ENCODE measurements at regions of chr6 and their contacts with region 1.

Region 1: DNA sequence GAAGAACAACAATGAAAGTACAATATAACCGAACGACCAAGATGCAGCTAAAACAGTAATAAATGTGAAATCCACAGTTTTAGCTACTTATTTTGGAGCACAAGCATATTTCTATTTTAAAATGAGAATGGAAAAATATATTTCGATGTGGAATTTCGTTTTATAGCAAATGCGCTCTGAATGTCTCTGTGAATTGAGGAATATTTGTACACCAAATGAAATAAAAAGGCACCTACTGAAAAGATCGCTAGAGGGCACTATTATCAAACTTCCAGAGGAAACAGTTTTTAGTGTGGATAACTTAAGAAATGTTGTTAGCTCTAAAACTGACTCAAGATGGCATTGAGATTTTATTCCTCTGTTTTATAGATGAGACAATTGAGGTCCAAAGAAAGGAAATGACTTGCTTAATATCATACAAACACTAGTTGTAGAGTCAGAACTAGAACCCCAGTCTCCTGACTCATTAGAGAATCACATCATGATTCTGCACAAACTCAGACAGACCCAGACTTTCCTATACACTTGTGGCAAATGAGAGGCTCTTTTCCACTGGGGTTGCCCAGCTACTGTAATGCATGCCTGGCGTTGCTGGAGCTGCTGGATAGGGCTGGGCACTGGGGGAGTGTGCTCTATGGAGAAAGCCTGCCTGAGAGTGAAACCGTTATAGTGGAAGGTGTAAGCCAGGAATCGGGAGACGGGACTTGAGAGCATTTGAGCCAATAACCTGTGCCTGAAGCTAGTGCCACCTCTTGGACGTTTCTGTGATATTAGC is 51.9 kb downstream of the GCLC start:
- DNase-seq: peak; percentile 74
- H3K4me3 ChIP-seq: peak overlapping the region in 1 of 3 experiments; percentile 31
- H3K27ac ChIP-seq: no peak overlapping the region
- H3K4me1 ChIP-seq: no peaks in the 10 kb centered on the region
- H3K27me3 ChIP-seq: no peaks in the 10 kb centered on the region
- CTCF ChIP-seq: peak; percentile 51 to 54
- POLR2A ChIP-seq: no peak

Region 2: DNA sequence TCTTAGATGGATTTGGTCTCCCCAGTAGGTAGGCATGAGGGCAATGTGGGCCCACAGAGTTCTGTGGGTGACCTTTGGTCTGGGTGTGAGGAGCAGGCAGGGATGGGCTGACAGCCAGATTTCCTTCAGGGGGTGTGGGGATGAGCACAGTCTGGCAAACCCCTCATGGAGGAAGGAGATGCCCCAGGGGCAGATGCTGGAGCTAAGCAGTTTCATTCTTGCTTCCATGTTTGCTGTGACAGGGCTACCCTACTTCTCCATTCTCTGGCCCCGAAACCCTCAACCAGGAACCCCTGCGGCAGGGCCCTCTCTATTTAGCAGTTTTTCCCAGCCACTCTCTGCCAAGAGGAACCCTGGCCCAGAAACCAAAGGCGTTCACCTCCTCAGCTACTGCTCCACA is 11.5 kb after region 1 on chr6:
- CTCF ChIA-PET with region 1: interaction called, 15 read pairs
- POLR2A ChIA-PET with region 1: no interaction called
- dilution Hi-C with region 1: no loop called
- intact Hi-C with region 1: no loop called
- DNase-seq: no peak
- H3K4me3 ChIP-seq: no peak overlapping the region
- H3K27ac ChIP-seq: no peak overlapping the region
- H3K4me1 ChIP-seq: no peaks in the 10 kb centered on the region
- H3K27me3 ChIP-seq: no peaks in the 10 kb centered on the region
- CTCF ChIP-seq: no peak
- POLR2A ChIP-seq: no peak

Region 3: DNA sequence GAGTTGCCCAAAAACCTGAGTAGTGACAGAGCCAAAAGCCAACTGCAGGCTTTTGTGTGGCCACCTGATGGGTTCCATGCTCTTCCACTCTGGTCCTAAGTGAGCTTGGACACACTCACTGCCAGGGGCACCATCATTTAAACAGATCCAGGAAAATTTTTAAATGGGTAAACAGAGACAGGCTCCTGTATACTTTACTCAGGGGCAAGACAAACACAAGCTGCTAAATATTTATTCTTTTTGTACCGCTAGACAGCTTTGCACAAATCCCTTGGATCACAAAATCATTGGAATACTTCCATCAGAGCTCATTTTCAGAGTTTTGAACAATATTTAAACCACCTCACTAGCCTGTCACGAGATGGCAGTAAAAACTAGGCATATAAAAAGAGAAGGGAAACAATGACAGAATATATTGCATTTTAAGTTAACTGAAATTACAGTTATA is 20.5 kb after region 1 on chr6:
- CTCF ChIA-PET with region 1: interaction called, 21 read pairs
- POLR2A ChIA-PET with region 1: no interaction called
- dilution Hi-C with region 1: no loop called
- intact Hi-C with region 1: no loop called
- DNase-seq: no peak
- H3K4me3 ChIP-seq: no peak overlapping the region
- H3K27ac ChIP-seq: no peak overlapping the region
- H3K4me1 ChIP-seq: no peaks in the 10 kb centered on the region
- H3K27me3 ChIP-seq: no peaks in the 10 kb centered on the region
- CTCF ChIP-seq: no peak
- POLR2A ChIP-seq: no peak

Region 4: DNA sequence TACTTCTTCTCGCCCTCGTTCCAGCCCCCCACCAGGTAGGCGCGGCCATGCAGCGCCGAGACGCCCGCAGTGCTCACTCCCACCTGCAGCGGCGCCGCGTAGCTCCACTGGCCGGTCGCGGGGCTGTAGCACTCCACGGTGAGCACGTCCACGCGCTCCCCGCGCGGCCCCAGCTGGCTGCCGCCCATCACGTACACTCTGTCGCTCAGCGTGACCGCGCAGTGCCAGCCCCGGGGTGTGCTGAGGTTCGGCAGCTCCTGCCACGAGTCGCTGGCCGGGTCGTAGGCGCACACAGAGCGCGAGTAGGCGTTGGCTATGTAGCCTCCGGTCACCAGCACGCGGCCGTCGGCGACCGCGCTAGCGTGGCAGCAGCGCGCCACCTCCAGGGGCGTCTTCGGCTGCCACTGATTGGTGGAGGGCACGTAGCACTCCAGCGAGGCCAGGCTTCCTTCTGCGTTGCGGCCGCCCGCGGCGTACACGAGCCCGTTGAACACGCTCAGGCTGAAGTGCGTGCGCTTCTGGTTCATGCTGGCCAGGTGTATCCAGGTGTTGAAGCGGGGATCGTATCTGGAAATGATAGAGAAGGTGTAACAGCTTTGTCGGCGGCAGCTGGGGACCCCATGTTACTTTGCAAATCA is 158.8 kb after region 1 on chr6:
- CTCF ChIA-PET with region 1: interaction called, 56 read pairs
- POLR2A ChIA-PET with region 1: no interaction called
- dilution Hi-C with region 1: no loop called
- intact Hi-C with region 1: loop called (anchors 1 kb)
- DNase-seq: peak; percentile 64
- H3K4me3 ChIP-seq: peak overlapping the region in 2 of 3 experiments; percentile 42 to 48
- H3K27ac ChIP-seq: no peak overlapping the region
- H3K4me1 ChIP-seq: peaks cover 5% of the 10 kb centered on the region
- H3K27me3 ChIP-seq: peaks cover 9 to 10% of the 10 kb centered on the region in 2 experiments
- CTCF ChIP-seq: peak in 1 of 2 donors; percentile 48
- POLR2A ChIP-seq: no peak

Region 5: GRCh38 chr6:53679446-53679933 is 186.4 kb after region 1 on chr6:
- CTCF ChIA-PET with region 1: interaction called, 9 read pairs
- POLR2A ChIA-PET with region 1: no interaction called
- dilution Hi-C with region 1: no loop called
- intact Hi-C with region 1: loop called (anchors 1 kb)
- DNase-seq: peak; percentile 33
- H3K4me3 ChIP-seq: no peak overlapping the region
- H3K27ac ChIP-seq: no peak overlapping the region
- H3K4me1 ChIP-seq: no peaks in the 10 kb centered on the region
- H3K27me3 ChIP-seq: peaks cover 0 to 2% of the 10 kb centered on the region in 2 experiments
- CTCF ChIP-seq: peak; percentile 20 to 28
- POLR2A ChIP-seq: no peak

Region 6: DNA sequence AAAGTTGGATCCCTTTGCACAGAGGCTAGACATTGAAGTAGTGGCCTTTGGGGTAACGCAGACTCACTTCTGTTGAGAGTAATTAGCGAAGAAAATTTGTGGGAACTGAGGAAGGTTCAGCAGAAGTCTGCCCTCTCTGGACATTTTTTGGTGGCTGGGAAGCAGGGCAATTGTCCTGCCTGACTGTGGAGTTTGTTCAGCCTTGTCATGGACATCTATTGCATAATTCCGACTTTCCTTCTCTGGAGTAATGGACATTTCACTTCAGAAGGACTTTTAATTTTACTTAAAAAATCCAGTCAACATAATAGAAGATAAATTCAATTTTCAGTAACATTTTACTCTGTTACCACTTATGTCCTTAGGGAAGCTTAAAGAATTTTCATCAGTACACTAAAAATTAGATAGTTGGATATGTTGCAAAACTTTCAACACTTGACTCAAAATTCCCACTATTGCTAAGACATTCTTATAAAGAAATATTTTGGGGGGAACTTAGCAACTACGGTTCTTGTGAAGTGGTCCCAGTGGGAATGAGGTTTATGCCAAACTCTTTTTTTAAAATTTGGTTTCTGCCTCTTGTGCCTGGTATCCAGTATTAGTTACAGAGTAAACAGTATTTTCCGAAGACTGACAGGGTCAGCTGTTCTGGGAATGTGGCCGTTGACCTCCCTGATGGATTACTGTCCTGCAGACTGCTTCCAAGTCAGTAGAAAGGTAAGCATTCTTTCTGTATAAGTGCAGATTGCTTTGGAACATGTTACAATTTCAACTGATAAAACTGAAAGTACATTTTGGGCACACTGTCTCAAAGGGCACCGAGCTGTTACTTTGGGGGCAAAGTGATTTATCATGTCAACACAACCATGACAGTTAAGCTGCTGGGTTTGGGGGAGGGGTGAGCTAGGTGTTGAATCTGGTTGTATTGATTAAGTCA is 517.6 kb after region 1 on chr6:
- CTCF ChIA-PET with region 1: no interaction called
- POLR2A ChIA-PET with region 1: no interaction called
- dilution Hi-C with region 1: no loop called
- intact Hi-C with region 1: no loop called
- DNase-seq: no peak
- H3K4me3 ChIP-seq: no peak overlapping the region
- H3K27ac ChIP-seq: no peak overlapping the region
- H3K4me1 ChIP-seq: no peaks in the 10 kb centered on the region
- H3K27me3 ChIP-seq: no peaks in the 10 kb centered on the region
- CTCF ChIP-seq: no peak
- POLR2A ChIP-seq: no peak

Region 7: DNA sequence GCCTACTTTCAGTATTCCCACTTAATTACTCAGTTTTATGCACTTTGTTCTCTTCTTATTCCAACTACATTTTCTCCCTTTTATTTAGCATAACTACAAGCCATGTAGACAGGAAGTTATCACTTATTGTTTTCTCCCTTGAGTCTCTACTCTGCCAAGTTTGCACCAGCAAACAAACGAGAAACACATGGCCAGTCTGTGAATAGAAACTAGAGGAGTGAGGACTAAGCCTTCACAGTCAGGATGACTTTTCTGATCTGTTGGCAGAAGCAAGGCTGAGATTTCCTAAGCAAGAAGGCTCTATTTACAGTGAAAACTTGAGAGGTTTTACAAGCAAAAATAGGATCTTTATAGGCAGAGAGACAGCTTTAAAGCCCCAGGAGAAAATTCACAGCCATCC is 745.3 kb after region 1 on chr6:
- CTCF ChIA-PET with region 1: no interaction called
- POLR2A ChIA-PET with region 1: no interaction called
- dilution Hi-C with region 1: no loop called
- intact Hi-C with region 1: no loop called
- DNase-seq: peak; percentile 90
- H3K4me3 ChIP-seq: no peak overlapping the region
- H3K27ac ChIP-seq: peak overlapping the region; percentile 11
- H3K4me1 ChIP-seq: no peaks in the 10 kb centered on the region
- H3K27me3 ChIP-seq: no peaks in the 10 kb centered on the region
- CTCF ChIP-seq: no peak
- POLR2A ChIP-seq: no peak

Measured in endothelial cell of umbilical vein (primary cell).